ENCODE measurements at regions of chr15 and their contacts with region 1.

Region 1: DNA sequence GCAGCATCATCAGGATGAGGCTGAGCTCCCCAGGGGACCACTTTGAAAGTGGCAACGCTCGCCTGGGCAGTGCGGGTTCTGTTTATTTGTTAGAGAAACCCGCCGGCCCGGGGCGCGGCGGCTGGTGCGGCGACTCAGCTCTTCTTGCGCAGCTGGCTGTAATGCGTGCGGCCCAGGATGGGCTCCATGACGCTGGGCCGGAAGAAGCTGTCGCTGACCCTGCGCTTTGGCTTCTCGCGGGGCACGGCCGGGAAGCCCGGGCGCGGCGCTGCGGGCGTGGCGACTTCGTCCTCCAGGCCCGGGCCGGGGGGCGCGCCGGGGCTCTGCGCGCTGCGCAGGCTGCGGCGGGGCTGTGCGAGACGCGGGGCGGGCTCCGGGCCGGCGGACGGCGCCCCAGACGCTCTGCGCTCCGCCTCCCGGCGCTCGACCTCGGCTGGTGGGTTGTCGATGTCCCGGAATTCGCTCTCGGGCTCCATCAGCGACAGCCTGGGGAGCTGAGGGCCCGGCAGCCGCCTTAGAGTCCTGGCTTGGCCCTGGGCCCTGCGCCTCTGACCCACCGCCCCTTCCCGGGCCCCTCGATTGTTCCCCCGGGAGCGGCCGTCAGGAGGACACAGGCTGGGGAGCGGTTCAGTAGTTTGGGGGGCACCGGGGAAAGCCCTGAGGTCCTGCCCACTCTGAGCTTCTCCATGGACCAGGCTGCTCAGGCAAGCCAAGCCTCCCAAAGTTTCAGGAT is 10.3 kb upstream of the KIF7 start:
- DNase-seq: peak in 1 of 2 donors; percentile 84
- H3K4me3 ChIP-seq: peak overlapping the region; percentile 32 to 55
- H3K27ac ChIP-seq: peak overlapping the region; percentile 96 to 98
- H3K4me1 ChIP-seq: peaks cover 8 to 20% of the 10 kb centered on the region in 2 donors
- H3K27me3 ChIP-seq: no peaks in the 10 kb centered on the region
- CTCF ChIP-seq: no peak

Region 2: GRCh38 chr15:89680282-89680873 is 14.8 kb after region 1 on chr15:
- intact Hi-C with region 1: loop called (anchors 1 kb)
- DNase-seq: peak in 1 of 2 donors; percentile 93
- H3K4me3 ChIP-seq: no peak overlapping the region
- H3K27ac ChIP-seq: peak overlapping the region; percentile 66 to 82
- H3K4me1 ChIP-seq: peaks cover 0 to 32% of the 10 kb centered on the region in 2 donors
- H3K27me3 ChIP-seq: no peaks in the 10 kb centered on the region
- CTCF ChIP-seq: no peak

Region 3: GRCh38 chr15:90101969-90102890 is 436.6 kb after region 1 on chr15 and contains the start of gene IDH2:
- intact Hi-C with region 1: loop called (anchors 10 kb)
- DNase-seq: peak; percentile 25 to 88
- H3K4me3 ChIP-seq: peak within 1 kb of the TSS; percentile 86 to 91
- H3K27ac ChIP-seq: peak within 1 kb of the TSS; percentile 88 to 92
- H3K4me1 ChIP-seq: peaks cover 14 to 36% of the 10 kb centered on the region in 2 donors
- H3K27me3 ChIP-seq: no peaks in the 10 kb centered on the region
- CTCF ChIP-seq: peak in 1 of 3 experiments; percentile 19
- total RNA-seq, gene IDH2: 49.7 TPM